ENCODE measurements at regions of chr7 and their contacts with region 1.

Region 1: GRCh38 chr7:16579216-16579615 is 52.6 kb downstream of the LRRC72 start:
- H3K4me3 Mint-ChIP-seq: no peak overlapping the region
- H3K27ac Mint-ChIP-seq: no peak overlapping the region
- H3K4me1 Mint-ChIP-seq: no peaks in the 10 kb centered on the region
- H3K27me3 Mint-ChIP-seq: no peaks in the 10 kb centered on the region

Region 2: DNA sequence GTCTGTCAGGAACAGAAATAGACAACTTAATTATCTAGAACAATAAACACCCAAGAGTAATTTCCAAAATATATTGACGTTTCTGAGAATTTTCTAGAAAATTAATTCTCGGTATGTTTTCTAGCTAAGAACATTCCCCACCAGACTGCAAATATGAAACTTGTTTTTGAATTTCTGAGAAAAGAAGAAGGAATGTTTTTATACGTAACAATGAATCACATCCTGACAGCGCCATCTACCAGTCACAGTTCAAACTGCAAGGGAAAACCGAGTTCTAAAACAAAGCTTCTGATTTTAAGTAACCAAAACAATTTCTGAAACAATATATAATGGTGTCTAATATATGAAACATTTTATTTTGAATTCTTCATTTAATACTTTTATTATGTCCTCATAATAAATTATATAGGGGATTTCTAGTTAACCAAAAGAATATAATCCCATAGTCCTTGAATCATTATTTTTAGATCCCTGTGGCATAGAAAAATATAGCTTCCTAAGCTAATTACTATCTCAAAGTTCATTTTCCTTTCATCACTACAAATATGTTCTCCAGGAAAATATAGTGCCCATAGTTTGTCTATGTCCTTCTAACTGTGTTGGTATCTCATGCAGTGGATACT is 858.3 kb before region 1 on chr7:
- intact Hi-C with region 1: loop called (anchors 10 kb)
- H3K4me3 Mint-ChIP-seq: no peak overlapping the region
- H3K27ac Mint-ChIP-seq: no peak overlapping the region
- H3K4me1 Mint-ChIP-seq: peaks cover 6% of the 10 kb centered on the region
- H3K27me3 Mint-ChIP-seq: no peaks in the 10 kb centered on the region